GM12878 (cell line): ENCODE measurements at regions of chr12 and their contacts with region 1.

Region 1: DNA sequence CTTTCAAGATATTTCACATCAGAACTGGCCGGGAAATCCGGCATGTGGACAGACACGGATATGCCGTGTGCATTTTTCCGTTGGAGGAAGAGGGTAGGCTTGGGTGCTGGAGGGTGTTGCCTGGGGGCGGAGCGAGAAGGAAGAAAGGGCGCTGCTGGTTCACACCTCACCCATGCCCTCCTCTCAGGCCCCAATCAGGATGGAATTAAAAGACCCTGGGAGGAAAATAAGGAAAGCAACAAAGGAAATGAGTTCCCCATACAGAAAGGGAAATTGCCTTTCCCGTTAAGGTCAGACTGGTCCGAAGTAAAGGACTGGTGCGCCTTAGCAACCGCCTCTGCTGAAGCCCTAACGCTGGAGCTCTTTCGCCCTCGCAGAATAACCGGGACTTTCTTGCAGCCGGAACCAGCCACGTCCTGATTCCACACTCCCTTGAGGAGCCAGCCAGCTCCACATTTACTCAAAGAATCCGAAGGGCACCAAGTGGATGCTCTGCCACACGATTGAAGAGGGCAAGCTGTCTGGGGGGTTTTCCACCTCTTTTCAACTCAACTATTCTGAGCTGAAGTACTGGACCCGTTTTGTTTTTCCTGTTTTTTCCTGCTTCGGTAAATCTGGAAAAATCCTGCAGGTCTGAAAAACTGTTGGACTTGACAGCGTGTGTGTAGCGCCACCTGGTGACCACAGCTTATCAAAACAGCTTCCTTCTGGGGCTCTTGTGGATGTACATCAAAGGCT is 37.7 kb upstream of the BCL2L14 start:
- DNase-seq: peak; percentile 66
- ATAC-seq: peak; percentile 68
- H3K4me3 ChIP-seq: peak overlapping the region; percentile 69
- H3K27ac ChIP-seq: peak overlapping the region; percentile 89
- H3K4me1 ChIP-seq: peaks cover 36% of the 10 kb centered on the region
- H3K27me3 ChIP-seq: no peaks in the 10 kb centered on the region
- CTCF ChIP-seq: peak; percentile 81 to 86 (median 82)
- EP300 ChIP-seq: peak in 1 of 2 experiments; percentile 21; a peak in 1 of 4 replicates
- POLR2A ChIP-seq: no peak
- RAD21 ChIP-seq: peak; percentile 96

Region 2: DNA sequence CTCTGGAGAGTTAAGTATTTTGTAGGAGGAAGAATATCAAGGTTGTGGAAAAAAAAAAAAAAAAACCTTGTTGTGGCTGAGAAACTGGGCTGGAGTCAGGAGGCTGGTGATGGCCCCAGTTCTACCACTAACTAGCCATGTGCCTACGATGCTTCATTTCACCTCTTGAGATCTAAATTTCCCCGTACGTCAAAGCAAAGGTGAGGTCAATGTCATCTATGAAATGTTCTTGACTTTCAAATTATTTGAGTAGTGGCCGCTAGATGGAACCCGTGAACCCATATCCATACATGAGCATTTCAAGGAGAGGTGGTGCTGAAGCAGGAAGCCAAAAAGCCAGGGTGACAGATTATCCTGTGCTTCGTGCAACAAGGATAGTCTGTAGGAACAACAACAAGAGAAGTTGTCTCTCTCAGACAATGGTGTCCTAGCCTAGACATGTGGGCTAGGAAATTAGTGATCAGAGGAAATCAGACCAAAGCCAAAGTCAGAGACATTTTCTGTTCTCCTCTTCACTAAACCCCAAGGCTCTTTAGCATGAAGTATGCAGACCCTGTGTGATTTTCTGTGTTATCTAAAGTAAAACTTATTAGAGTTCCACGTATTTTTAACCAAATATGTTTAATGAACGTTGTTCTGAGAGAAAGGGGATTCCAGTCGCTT is 479.0 kb before region 1 on chr12:
- CTCF ChIA-PET with region 1: interaction called, 27 read pairs
- POLR2A ChIA-PET with region 1: interaction called, 9 read pairs
- RAD21 ChIA-PET with region 1: interaction called, 21 read pairs
- SMC1A ChIA-PET with region 1: interaction called, 33 read pairs
- in situ Hi-C with region 1: no loop called
- intact Hi-C with region 1: loop called (anchors 1 kb)
- DNase-seq: peak; percentile 88
- ATAC-seq: peak; percentile 87
- H3K4me3 ChIP-seq: no peak overlapping the region
- H3K27ac ChIP-seq: peak overlapping the region; percentile 70
- H3K4me1 ChIP-seq: peaks cover 4% of the 10 kb centered on the region; the same call in 1 of the 2 replicates
- H3K27me3 ChIP-seq: no peaks in the 10 kb centered on the region
- CTCF ChIP-seq: peak; percentile 61 to 77 (median 63)
- EP300 ChIP-seq: peak; percentile 45 to 58; a peak in 2 of 4 replicates
- POLR2A ChIP-seq: no peak
- RAD21 ChIP-seq: peak; percentile 88

Region 3: DNA sequence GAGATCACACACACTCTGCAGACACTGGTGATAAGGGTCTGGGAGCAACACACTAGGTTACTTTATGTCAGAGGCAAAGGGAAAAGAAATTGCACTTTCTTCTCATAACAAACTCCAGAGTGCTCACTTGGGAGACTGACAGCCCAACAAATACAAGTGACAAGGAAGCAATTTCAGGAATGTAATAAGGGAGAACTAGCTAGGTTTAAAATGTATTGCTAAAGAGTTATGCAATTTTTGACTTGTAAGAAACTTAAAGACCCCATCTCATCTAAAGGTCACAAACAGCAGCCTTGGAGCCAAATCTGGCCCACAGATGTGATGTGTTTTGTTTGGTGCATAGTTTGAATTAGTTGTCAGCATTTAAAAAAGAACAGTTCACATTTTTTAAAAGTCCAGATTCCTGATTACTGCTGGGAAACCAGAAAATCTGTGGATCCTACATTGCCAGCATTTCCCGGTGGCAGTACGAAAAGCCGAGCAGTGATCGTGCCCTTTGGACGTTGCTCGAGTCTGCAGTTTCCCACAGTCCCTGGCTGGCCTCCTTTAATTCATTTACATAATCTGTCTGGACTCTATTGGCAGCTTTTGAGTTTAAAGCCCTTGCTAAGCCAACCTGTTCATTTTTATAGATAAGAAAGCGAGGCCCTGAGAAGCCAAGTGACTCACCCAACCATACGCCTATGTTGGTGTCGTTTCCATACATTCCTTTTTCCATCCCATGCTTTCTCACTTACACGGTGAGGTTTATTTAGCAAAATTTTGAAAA is 425.5 kb before region 1 on chr12:
- CTCF ChIA-PET with region 1: no interaction called
- POLR2A ChIA-PET with region 1: no interaction called
- RAD21 ChIA-PET with region 1: no interaction called
- SMC1A ChIA-PET with region 1: no interaction called
- in situ Hi-C with region 1: no loop called
- intact Hi-C with region 1: no loop called
- DNase-seq: no peak
- ATAC-seq: no peak
- H3K4me3 ChIP-seq: no peak overlapping the region
- H3K27ac ChIP-seq: no peak overlapping the region
- H3K4me1 ChIP-seq: 0 out of 2 replicates have a peak, but pooled peaks cover under 1% of the 10 kb centered on the region
- H3K27me3 ChIP-seq: no peaks in the 10 kb centered on the region
- CTCF ChIP-seq: no peak
- EP300 ChIP-seq: no peak
- POLR2A ChIP-seq: no peak
- RAD21 ChIP-seq: no peak

Region 4: DNA sequence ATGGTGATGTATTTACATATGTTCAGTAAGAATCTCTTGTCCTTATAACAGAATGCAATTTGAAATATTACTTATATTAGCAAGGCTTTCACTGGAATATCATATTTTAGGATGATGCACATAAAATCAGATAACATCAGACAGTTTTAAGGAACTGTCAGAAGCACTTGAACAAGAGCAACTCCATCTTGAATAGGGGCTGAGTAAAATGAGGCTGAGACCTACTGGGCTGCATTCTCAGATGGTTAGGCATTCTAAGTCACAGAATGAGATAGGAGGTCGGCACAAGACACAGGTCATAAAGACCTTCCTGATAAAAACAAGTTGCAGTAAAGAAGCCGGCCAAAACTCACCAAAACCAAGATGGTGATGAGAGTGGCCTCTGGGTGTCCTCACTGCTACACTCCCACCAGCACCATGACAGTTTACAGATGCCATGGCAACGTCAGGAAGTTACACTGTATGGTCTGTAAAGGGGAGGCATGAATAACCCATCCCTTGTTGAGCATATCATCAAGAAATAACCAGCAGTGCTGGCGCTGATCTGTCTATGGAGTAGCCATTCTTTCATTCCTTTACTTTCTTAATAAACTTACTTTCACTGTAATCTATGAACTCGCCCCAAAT is 411.1 kb before region 1 on chr12:
- CTCF ChIA-PET with region 1: interaction called, 47 read pairs
- POLR2A ChIA-PET with region 1: interaction called, 5 read pairs
- RAD21 ChIA-PET with region 1: interaction called, 19 read pairs
- SMC1A ChIA-PET with region 1: interaction called, 31 read pairs
- in situ Hi-C with region 1: no loop called
- intact Hi-C with region 1: no loop called
- DNase-seq: no peak
- ATAC-seq: peak; percentile 64
- H3K4me3 ChIP-seq: no peak overlapping the region
- H3K27ac ChIP-seq: no peak overlapping the region
- H3K4me1 ChIP-seq: no peaks in the 10 kb centered on the region
- H3K27me3 ChIP-seq: no peaks in the 10 kb centered on the region
- CTCF ChIP-seq: peak in 1 of 3 experiments; percentile 8; a peak in 2 of 6 replicates
- EP300 ChIP-seq: no peak
- POLR2A ChIP-seq: no peak
- RAD21 ChIP-seq: peak; percentile 41; the same call in 1 of the 2 replicates

Region 5: DNA sequence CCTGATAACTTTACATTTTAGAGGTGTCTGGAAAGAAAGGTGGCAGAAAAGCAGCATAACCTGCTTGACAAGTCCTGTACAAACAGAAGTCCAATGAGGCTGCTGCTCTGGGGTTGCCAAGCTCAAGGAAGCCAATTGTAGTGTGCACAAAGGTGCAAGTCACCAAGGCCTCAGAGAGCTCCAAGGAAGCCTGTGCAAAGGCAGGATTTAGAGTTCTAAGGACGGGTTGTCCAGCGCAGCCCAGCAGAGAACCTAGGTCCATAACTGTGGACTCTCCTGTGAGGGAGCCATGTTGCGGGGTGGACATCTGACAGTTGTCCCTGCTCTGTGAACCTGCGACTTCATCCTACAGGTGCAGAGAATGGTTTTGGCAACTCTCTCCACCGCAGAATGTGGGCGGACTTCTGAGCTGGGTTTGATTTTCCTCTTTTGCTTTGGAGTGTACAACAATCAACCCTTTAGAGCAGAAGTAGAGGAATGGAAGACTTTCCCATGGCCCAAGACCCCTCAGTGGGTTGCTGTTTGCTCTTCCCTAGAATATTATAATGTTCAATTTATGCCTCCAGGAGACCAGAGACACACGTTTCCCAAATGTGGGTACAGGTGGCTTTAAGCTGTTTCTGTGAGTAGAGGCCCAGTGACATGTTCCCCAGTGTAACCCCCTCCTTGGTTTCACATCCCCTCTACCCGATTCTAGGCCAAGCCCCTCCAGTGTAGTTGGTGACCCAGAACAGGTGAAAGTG is 302.6 kb before region 1 on chr12:
- CTCF ChIA-PET with region 1: interaction called, 43 read pairs
- POLR2A ChIA-PET with region 1: interaction called, 6 read pairs
- RAD21 ChIA-PET with region 1: interaction called, 16 read pairs
- SMC1A ChIA-PET with region 1: interaction called, 18 read pairs
- in situ Hi-C with region 1: no loop called
- intact Hi-C with region 1: no loop called
- DNase-seq: peak; percentile 85
- ATAC-seq: peak; percentile 49
- H3K4me3 ChIP-seq: peak overlapping the region; percentile 18; the same call in 1 of the 2 replicates
- H3K27ac ChIP-seq: peak overlapping the region; percentile 89
- H3K4me1 ChIP-seq: peaks cover 93% of the 10 kb centered on the region
- H3K27me3 ChIP-seq: no peaks in the 10 kb centered on the region
- CTCF ChIP-seq: no peak
- EP300 ChIP-seq: peak in 1 of 2 experiments; percentile 52; a peak in 2 of 4 replicates
- POLR2A ChIP-seq: peak; percentile 62; the same call in 1 of the 2 replicates
- RAD21 ChIP-seq: peak; percentile 34

Region 6: DNA sequence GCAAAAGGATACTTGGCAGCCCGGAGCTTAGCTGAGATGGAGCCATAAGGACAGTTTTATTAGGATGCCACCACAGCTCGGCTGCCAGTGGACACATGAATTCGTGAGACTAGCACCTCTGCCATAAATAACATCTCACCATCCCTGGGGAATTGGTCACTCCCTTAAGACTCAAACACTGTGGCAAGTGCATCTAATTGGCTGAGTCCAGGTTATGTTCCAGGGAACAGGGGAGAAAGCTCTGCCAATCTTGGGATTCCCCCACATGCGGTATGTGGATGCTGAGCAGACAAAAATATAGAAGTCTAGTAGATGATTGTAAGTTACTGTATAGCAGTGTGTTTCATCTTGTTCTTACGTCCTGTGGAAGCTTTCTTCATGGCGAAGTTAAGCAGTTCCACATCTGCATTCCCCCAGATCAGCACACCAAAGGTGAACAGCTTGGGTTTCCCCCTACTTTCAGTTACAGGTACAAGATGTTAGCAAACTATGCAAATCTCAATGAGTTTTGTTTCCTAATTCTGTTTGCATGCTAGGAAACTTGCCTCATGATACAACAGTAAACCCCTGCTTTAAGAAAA is 252.4 kb before region 1 on chr12:
- CTCF ChIA-PET with region 1: interaction called, 4 read pairs
- POLR2A ChIA-PET with region 1: no interaction called
- RAD21 ChIA-PET with region 1: interaction called, 23 read pairs
- SMC1A ChIA-PET with region 1: interaction called, 23 read pairs
- in situ Hi-C with region 1: no loop called
- intact Hi-C with region 1: no loop called
- DNase-seq: peak; percentile 94
- ATAC-seq: peak; percentile 79
- H3K4me3 ChIP-seq: peak overlapping the region; percentile 13; the same call in 1 of the 2 replicates
- H3K27ac ChIP-seq: peak overlapping the region; percentile 95
- H3K4me1 ChIP-seq: peaks cover 67% of the 10 kb centered on the region
- H3K27me3 ChIP-seq: no peaks in the 10 kb centered on the region
- CTCF ChIP-seq: no peak
- EP300 ChIP-seq: peak; percentile 67 to 91; a peak in 2 of 4 replicates
- POLR2A ChIP-seq: peak; percentile 48; the same call in 1 of the 2 replicates
- RAD21 ChIP-seq: 0 out of 2 replicates have a peak, but pooled peaks have one; percentile 3

Region 7: GRCh38 chr12:11882301-11883019 is 150.6 kb before region 1 on chr12:
- CTCF ChIA-PET with region 1: interaction called, 7 read pairs
- POLR2A ChIA-PET with region 1: interaction called, 4 read pairs
- RAD21 ChIA-PET with region 1: interaction called, 9 read pairs
- SMC1A ChIA-PET with region 1: interaction called, 3 read pairs
- in situ Hi-C with region 1: no loop called
- intact Hi-C with region 1: loop called (anchors 2 kb)
- DNase-seq: peak; percentile 39
- ATAC-seq: peak; percentile 82
- H3K4me3 ChIP-seq: no peak overlapping the region
- H3K27ac ChIP-seq: peak overlapping the region; percentile 62
- H3K4me1 ChIP-seq: peaks cover 26% of the 10 kb centered on the region
- H3K27me3 ChIP-seq: no peaks in the 10 kb centered on the region
- CTCF ChIP-seq: no peak
- EP300 ChIP-seq: no peak
- POLR2A ChIP-seq: no peak
- RAD21 ChIP-seq: no peak

Region 8: GRCh38 chr12:12070674-12071656 is 37.9 kb after region 1 on chr12 and contains the start of gene BCL2L14:
- CTCF ChIA-PET with region 1: interaction called, 13 read pairs
- POLR2A ChIA-PET with region 1: no interaction called
- RAD21 ChIA-PET with region 1: interaction called, 8 read pairs
- SMC1A ChIA-PET with region 1: interaction called, 10 read pairs
- in situ Hi-C with region 1: no loop called
- intact Hi-C with region 1: no loop called
- DNase-seq: peak; percentile 36
- ATAC-seq: peak; percentile 86
- H3K4me3 ChIP-seq: peak within 1 kb of the TSS; percentile 72
- H3K27ac ChIP-seq: peak within 1 kb of the TSS; percentile 70
- H3K4me1 ChIP-seq: peaks cover 7% of the 10 kb centered on the region
- H3K27me3 ChIP-seq: no peaks in the 10 kb centered on the region
- CTCF ChIP-seq: no peak; a peak in 1 of 6 replicates
- EP300 ChIP-seq: no peak
- POLR2A ChIP-seq: no peak
- RAD21 ChIP-seq: no peak
- polyA plus RNA-seq, gene BCL2L14: 0.62 to 0.64 TPM